Ovary (tissue), 10 donors: ENCODE measurements at regions of chr2 and their contacts with region 1.

Region 1: GRCh38 chr2:101958061-101958460 is 33.7 kb upstream of the IL1R2 start:
- DNase-seq: no peak
- H3K4me3 ChIP-seq: no peak overlapping the region
- H3K27ac ChIP-seq: no peak overlapping the region
- H3K4me1 ChIP-seq: peaks cover 16% of the 10 kb centered on the region
- H3K27me3 ChIP-seq: no peaks in the 10 kb centered on the region
- CTCF ChIP-seq: no peak
- EP300 ChIP-seq: no peak
- POLR2A ChIP-seq: no peak

Region 2: GRCh38 chr2:101883863-101884262 is 74.2 kb before region 1 on chr2:
- intact Hi-C with region 1: loop called in 1 of 4 experiments (anchors 10 kb)
- DNase-seq: peak in 1 of 5 donors; percentile 31
- H3K4me3 ChIP-seq: no peak overlapping the region
- H3K27ac ChIP-seq: no peak overlapping the region
- H3K4me1 ChIP-seq: no peaks in the 10 kb centered on the region
- H3K27me3 ChIP-seq: no peaks in the 10 kb centered on the region
- CTCF ChIP-seq: peak in 2 of 3 donors; percentile 27 to 61
- EP300 ChIP-seq: no peak
- POLR2A ChIP-seq: no peak

Region 3: DNA sequence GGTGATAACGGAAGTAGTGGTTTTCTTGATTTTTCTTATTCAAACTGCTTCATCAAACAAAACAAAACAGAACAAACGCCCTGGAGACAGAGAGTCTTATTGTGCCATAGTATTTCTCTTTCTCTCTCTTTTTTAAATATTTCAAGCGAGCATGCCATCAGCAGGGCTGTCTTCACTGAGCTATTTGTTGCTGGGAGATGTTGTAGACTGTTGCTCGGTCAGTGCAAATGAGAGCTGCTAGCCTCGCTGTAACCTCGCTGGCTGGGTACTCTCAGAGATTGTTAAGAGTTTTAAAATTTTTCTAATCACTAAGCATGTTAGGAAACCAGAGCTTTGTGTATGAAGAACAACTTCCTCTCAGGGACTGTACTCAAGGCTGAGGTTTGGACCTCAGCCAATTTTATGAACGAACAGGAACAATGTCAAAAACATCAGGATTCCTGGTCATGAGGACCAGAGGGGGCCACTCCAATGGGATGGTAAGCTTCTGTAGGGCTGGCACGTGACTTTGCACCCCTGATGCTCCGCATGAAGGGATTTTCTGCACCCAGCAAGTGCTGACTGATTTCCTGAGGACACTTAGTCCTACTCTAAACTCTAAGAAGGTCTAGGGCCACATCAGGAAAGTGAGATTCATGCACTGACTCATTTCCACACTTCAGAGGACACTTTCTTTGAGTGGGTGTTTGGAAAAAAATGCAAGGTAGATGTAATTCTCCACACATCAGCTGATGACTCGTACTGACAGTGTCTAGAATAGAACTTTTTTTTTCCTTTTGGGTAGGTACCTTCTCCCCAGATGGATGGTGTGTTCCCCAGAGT is 124.7 kb after region 1 on chr2:
- intact Hi-C with region 1: no loop called
- DNase-seq: peak in 1 of 5 donors; percentile 30
- H3K4me3 ChIP-seq: no peak overlapping the region
- H3K27ac ChIP-seq: no peak overlapping the region
- H3K4me1 ChIP-seq: peaks cover 2% of the 10 kb centered on the region
- H3K27me3 ChIP-seq: no peaks in the 10 kb centered on the region
- CTCF ChIP-seq: no peak
- EP300 ChIP-seq: no peak
- POLR2A ChIP-seq: no peak